SK-N-SH (cell line): ENCODE measurements at regions of chr1 and their contacts with region 1.

Region 1: DNA sequence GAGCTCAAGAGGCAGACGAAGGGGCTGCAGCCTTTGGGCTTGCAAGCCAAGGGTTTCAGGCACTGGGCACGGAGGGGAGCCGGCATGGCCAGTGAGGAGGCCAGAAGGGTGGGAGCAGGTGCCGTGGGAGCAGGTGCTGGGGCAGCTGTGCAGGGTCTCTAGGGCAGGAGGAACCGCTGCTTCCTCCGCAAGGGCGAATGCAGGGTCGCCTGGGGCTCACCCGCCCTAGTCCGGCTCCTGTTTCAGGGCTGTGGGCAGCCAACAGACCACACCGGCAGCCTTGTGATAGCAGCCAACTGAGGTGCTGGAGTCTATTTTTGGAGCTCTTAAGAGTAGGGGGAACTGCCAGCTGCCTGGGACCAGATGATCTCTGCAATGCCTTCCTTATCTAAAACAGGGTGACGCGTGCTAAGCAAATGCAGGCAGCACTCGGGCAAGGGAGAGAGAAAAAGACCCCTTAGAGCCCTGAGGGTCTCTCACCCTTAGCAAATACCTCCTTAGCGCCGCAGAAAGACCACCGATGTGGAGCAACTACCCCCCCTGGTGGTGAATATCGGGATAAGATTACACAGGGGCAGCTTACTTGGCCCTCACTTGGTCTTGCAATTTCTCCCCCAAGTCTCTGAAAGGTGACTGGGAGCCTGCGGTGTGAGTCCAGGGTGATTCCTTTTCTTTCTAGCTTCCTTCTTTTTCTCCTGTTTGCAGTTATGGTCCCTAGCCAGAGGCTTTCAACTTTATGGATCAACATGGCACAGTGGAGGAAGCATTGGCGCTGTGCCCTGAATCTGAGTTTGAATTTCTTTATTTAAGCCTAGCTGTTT is 20.7 kb upstream of the MAPKAPK2 start:
- DNase-seq: peak; percentile 84
- H3K4me3 ChIP-seq: peak overlapping the region; percentile 8 to 39; a peak in 2 of 4 replicates
- H3K27ac ChIP-seq: no peak overlapping the region
- H3K4me1 ChIP-seq: peaks cover 0 to 6% of the 10 kb centered on the region in 2 experiments; a peak in 1 of 4 replicates
- H3K27me3 ChIP-seq: peaks cover 23% of the 10 kb centered on the region; the same call in 1 of the 2 replicates
- CTCF ChIP-seq: peak; percentile 89
- EP300 ChIP-seq: no peak
- RAD21 ChIP-seq: peak; percentile 89

Region 2: GRCh38 chr1:206544562-206545257 is 119.3 kb before region 1 on chr1:
- CTCF ChIA-PET with region 1: interaction called, 17 read pairs
- POLR2A ChIA-PET with region 1: no interaction called
- DNase-seq: peak; percentile 86
- H3K4me3 ChIP-seq: no peak overlapping the region; a peak in 1 of 4 replicates
- H3K27ac ChIP-seq: no peak overlapping the region
- H3K4me1 ChIP-seq: no peaks in the 10 kb centered on the region; a peak in 1 of 4 replicates
- H3K27me3 ChIP-seq: no peaks in the 10 kb centered on the region; the same call in 1 of the 2 replicates
- CTCF ChIP-seq: peak; percentile 86
- EP300 ChIP-seq: no peak
- RAD21 ChIP-seq: peak; percentile 73

Region 3: DNA sequence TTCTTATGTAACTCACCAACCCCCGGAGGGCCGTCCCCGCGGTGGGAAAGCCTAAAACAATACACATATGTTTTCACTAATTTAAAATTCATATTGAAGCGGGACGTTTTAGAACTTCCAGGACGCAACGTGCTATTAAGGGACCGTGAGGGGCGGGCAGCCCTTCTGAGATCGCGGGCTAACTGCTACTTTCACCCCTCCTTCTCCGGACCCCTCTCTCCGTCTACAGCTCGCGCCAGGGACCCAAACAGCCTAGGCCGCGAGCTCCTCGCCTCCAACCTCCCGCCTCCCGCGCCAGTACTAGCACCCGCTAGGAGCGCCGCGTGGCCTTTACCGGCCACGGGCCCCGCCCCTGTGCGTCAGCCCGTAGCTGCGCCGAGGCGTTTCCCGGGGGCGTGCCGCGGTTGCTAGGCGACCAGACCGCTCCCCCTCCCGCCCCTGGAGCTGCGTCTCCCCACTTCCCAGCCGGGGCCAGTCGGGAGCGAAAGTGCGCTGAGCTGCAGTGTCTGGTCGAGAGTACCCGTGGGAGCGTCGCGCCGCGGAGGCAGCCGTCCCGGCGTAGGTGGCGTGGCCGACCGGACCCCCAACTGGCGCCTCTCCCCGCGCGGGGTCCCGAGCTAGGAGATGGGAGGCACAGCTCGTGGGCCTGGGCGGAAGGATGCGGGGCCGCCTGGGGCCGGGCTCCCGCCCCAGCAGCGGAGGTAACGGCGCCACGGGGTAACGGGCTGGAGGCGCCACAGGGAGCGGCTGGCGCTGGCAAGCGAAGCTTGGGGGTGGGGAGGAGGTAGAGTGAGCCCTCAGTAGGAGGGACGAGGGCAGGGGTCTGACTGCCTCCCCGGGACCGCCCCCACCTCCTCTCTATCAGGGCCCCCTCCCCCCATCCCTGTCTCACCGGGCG is 28.7 kb before region 1 on chr1 and contains the start of gene DYRK3:
- CTCF ChIA-PET with region 1: interaction called, 450 read pairs
- POLR2A ChIA-PET with region 1: interaction called, 22 read pairs
- DNase-seq: peak; percentile 97
- H3K4me3 ChIP-seq: peak within 1 kb of the TSS; percentile 87 to 92
- H3K27ac ChIP-seq: peak within 1 kb of the TSS; percentile 79 to 83
- H3K4me1 ChIP-seq: peaks cover 18 to 22% of the 10 kb centered on the region in 2 experiments; a peak in 3 of 4 replicates
- H3K27me3 ChIP-seq: no peaks in the 10 kb centered on the region
- CTCF ChIP-seq: no peak
- EP300 ChIP-seq: no peak; a peak in 1 of 4 replicates
- RAD21 ChIP-seq: no peak
- polyA plus RNA-seq, gene DYRK3: 3.6 and 5.8 TPM in 2 replicates

Region 4: GRCh38 chr1:206674745-206675175 is 10.7 kb after region 1 on chr1:
- CTCF ChIA-PET with region 1: interaction called, 61 read pairs
- POLR2A ChIA-PET with region 1: no interaction called
- DNase-seq: no peak
- H3K4me3 ChIP-seq: no peak overlapping the region
- H3K27ac ChIP-seq: peak overlapping the region in 1 of 2 experiments; percentile 67; a peak in 2 of 4 replicates
- H3K4me1 ChIP-seq: peaks cover 0 to 9% of the 10 kb centered on the region in 2 experiments; a peak in 3 of 4 replicates
- H3K27me3 ChIP-seq: no peaks in the 10 kb centered on the region
- CTCF ChIP-seq: no peak
- EP300 ChIP-seq: no peak
- RAD21 ChIP-seq: no peak

Region 5: DNA sequence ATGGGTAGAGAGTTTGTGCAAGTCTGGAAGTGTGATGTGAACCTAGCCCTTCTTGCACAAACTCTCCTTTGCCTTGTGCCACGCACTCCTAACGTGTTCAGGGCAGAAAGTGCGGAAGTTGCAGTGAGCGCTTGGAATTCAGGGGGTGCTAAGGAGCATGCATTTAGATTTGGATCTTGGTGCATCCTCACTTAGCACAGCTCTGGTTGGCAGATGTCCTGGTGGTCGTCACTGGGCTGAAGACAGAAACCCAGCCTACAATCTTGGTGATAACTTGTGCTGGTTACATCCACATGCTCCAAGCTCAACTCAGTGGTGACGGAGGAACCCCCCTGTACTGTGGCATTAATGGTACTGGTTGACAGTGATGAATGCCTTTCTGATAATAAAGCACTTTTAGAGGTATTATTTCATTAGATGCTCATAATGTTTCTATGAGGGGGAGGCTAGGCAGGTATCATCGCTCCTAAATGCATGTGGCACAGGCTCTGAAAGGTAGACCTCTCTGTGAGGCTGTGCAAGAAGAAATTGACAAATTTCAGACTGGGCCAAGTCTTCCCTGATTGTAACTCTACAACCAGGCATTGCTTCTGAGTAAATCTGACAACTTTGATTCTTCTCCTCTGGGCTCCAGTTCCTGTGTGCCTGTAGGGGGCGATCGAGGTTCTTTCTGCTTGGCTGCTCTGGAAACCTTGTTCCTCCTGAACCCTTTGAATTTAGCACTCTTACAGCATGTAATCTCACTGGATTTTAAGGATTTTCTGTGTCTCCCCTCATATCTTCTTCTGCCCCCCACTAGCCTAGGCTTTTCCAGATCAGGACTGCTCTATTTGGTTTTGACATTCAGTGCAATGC is 61.3 kb after region 1 on chr1:
- CTCF ChIA-PET with region 1: interaction called, 15 read pairs
- POLR2A ChIA-PET with region 1: no interaction called
- DNase-seq: peak; percentile 67
- H3K4me3 ChIP-seq: no peak overlapping the region; a peak in 1 of 4 replicates
- H3K27ac ChIP-seq: no peak overlapping the region
- H3K4me1 ChIP-seq: peaks cover 0 to 10% of the 10 kb centered on the region in 2 experiments; a peak in 1 of 4 replicates
- H3K27me3 ChIP-seq: no peaks in the 10 kb centered on the region
- CTCF ChIP-seq: peak; percentile 65
- EP300 ChIP-seq: no peak
- RAD21 ChIP-seq: peak; percentile 52

Region 6: GRCh38 chr1:206925106-206925736 is 261.2 kb after region 1 on chr1:
- CTCF ChIA-PET with region 1: no interaction called
- POLR2A ChIA-PET with region 1: no interaction called
- DNase-seq: no peak
- H3K4me3 ChIP-seq: no peak overlapping the region
- H3K27ac ChIP-seq: no peak overlapping the region
- H3K4me1 ChIP-seq: no peaks in the 10 kb centered on the region
- H3K27me3 ChIP-seq: no peaks in the 10 kb centered on the region
- CTCF ChIP-seq: no peak
- EP300 ChIP-seq: no peak
- RAD21 ChIP-seq: no peak